Caco-2 (cell line): ENCODE measurements at regions of chr11 and their contacts with region 1.

Region 1: GRCh38 chr11:127843483-127844396 is 743.6 kb downstream of the ETS1 start:
- DNase-seq: peak; percentile 79 to 83
- H3K4me3 ChIP-seq: no peak overlapping the region
- H3K4me3 Mint-ChIP-seq: no peak overlapping the region
- H3K27ac Mint-ChIP-seq: no peak overlapping the region
- H3K4me1 ChIP-seq: no peaks in the 10 kb centered on the region
- H3K4me1 Mint-ChIP-seq: no peaks in the 10 kb centered on the region
- H3K27me3 ChIP-seq: no peaks in the 10 kb centered on the region
- H3K27me3 Mint-ChIP-seq: no peaks in the 10 kb centered on the region
- CTCF ChIP-seq: peak; percentile 90 to 91

Region 2: DNA sequence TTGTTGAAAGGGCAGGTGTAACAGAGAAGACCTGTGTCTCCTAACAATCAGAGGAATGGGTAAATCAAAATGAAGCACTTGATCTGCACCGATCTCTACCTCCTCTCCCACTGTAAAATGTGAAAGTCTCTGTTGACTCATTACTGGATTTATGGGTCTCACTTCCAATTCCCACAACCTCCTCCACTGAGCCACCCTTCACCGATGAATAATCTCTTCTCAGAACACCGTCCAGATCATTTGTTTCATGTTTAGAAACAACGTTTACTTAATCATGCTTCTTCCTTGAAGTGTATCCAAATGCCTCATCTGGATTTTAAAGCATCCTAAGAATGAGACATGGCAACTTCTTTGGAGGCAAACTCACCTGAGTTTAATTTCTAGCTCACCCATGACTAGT is 100.0 kb after region 1 on chr11:
- CTCF ChIA-PET with region 1: no interaction called
- POLR2A ChIA-PET with region 1: no interaction called
- intact Hi-C with region 1: loop called (anchors 5 kb)
- DNase-seq: no peak
- H3K4me3 ChIP-seq: no peak overlapping the region
- H3K4me3 Mint-ChIP-seq: no peak overlapping the region
- H3K27ac Mint-ChIP-seq: no peak overlapping the region
- H3K4me1 ChIP-seq: no peaks in the 10 kb centered on the region
- H3K4me1 Mint-ChIP-seq: no peaks in the 10 kb centered on the region
- H3K27me3 ChIP-seq: no peaks in the 10 kb centered on the region
- H3K27me3 Mint-ChIP-seq: no peaks in the 10 kb centered on the region
- CTCF ChIP-seq: no peak